ENCODE measurements at regions of chr5 and their contacts with region 1.

Region 1: DNA sequence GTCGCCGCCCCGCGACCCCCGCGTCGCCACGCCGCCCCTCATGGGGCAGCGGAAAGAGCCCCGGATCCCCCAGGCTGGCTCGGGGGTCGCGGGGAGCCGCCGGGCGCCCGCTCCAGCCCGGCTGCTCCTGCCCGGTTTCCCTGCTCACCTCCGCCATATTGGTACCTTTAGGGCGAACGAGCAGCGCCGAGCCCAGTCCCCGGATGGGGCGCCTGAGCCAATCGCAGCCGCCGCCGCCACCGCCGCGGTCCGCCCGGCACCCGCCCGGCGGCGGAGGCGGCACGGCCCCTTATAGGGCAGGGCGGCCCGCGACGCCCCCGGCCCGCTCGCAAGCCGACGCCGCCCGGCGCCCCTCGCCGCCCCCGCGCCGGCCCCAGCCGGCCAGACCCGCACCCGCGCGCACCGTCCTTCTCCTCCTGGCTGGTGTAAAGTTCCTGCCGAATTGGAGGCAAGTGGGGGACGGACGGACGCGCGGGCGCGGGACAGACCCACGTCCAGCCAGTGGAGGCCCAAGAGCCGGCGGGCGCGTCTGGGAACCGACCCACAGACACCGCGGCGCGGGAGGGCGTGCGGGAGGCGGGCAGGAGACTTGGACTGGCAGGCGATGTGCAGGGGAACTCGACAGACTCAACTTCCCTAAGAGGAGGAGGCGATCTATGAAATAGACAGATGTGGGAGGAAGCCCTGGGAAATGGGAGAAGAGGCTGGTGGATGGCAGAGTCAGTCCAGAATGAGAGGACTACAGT is at the start of gene MIER3:
- DNase-seq: peak; percentile 62
- ATAC-seq: peak; percentile 91
- H3K4me3 ChIP-seq: peak within 1 kb of the TSS; percentile 75
- H3K27ac ChIP-seq: no peak within 1 kb of the TSS
- H3K4me1 ChIP-seq: 0 out of 2 replicates have a peak, but pooled peaks cover 6% of the 10 kb centered on the region
- H3K27me3 ChIP-seq: peaks cover 9% of the 10 kb centered on the region; the same call in 1 of the 2 replicates
- CTCF ChIP-seq: no peak
- total RNA-seq, gene MIER3: 5.8 and 6.5 TPM in 2 replicates

Region 2: DNA sequence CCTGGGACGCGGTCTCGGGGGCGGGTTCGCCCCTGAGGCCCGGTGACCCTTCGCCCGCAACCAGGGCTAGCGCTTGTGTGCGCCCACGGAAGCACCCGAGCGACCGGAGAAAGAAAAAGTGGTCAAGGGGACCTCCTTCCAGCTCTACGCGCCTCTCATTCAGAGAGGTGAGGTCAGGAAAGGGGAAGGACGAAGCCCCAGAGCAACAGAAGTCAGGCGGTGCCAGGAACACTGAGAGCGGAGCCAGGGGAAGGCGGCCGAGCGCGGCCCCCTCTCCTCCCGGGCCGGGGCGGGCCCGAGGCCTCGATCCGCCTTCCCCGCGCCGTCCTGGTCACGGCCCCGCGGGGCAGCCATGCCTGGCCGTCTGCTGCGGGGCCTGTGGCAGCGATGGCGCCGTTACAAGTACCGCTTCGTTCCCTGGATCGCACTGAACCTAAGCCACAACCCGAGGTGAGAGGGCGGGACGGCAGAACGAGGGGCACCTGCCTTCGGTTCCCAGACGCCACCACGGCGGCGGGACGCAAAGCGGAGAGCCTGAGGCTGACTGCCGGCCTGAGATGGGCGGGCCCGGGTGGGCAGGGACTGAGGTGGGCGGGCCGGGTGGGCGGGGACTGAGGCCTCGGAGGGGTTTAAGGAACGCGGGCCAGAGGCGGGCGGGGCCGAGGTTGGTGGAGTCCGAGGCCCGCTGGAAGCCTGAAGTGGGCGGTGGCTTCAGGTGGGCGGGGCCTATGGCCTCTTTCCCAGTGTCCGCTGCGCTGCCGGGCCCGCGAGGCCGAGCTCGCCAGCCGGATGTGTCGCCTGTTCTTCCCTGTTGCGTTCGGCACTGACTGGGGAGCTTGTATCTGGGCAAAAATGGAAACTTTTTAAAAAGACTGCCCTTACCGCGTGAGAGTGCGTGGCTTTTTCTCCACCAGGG is 42.6 kb before region 1 on chr5 and contains the start of gene SETD9:
- CTCF ChIA-PET with region 1: no interaction called
- POLR2A ChIA-PET with region 1: no interaction called
- intact Hi-C with region 1: loop called (anchors 1 kb)
- DNase-seq: peak; percentile 92
- ATAC-seq: peak; percentile 88
- H3K4me3 ChIP-seq: peak within 1 kb of the TSS; percentile 83
- H3K27ac ChIP-seq: peak within 1 kb of the TSS; percentile 69
- H3K4me1 ChIP-seq: peaks cover 6% of the 10 kb centered on the region
- H3K27me3 ChIP-seq: no peaks in the 10 kb centered on the region
- CTCF ChIP-seq: no peak
- total RNA-seq, gene SETD9: 4.5 and 6.0 TPM in 2 replicates

Region 3: GRCh38 chr5:57042524-57042931 is 90.4 kb after region 1 on chr5:
- CTCF ChIA-PET with region 1: no interaction called
- POLR2A ChIA-PET with region 1: no interaction called
- intact Hi-C with region 1: no loop called
- DNase-seq: no peak
- ATAC-seq: no peak
- H3K4me3 ChIP-seq: no peak overlapping the region
- H3K27ac ChIP-seq: no peak overlapping the region
- H3K4me1 ChIP-seq: no peaks in the 10 kb centered on the region
- H3K27me3 ChIP-seq: no peaks in the 10 kb centered on the region
- CTCF ChIP-seq: no peak

Region 4: GRCh38 chr5:57082441-57083067 is 130.4 kb after region 1 on chr5:
- CTCF ChIA-PET with region 1: no interaction called
- POLR2A ChIA-PET with region 1: no interaction called
- intact Hi-C with region 1: loop called (anchors 5 kb)
- DNase-seq: peak; percentile 47
- ATAC-seq: peak; percentile 46; the same call in 1 of the 2 replicates
- H3K4me3 ChIP-seq: no peak overlapping the region
- H3K27ac ChIP-seq: no peak overlapping the region
- H3K4me1 ChIP-seq: no peaks in the 10 kb centered on the region
- H3K27me3 ChIP-seq: no peaks in the 10 kb centered on the region
- CTCF ChIP-seq: peak; percentile 51; the same call in 1 of the 2 replicates

Region 5: GRCh38 chr5:57221049-57221568 is 269.0 kb after region 1 on chr5:
- CTCF ChIA-PET with region 1: no interaction called
- POLR2A ChIA-PET with region 1: no interaction called
- intact Hi-C with region 1: loop called (anchors 5 kb)
- DNase-seq: peak; percentile 72
- ATAC-seq: peak; percentile 56
- H3K4me3 ChIP-seq: no peak overlapping the region
- H3K27ac ChIP-seq: no peak overlapping the region
- H3K4me1 ChIP-seq: peaks cover 10% of the 10 kb centered on the region
- H3K27me3 ChIP-seq: no peaks in the 10 kb centered on the region
- CTCF ChIP-seq: peak; percentile 76

Measured in PC-3 (cell line).